Activated CD4-positive, alpha-beta memory T cell treated with anti-CD3 and anti-CD28 coated beads for 36 hours (primary cell): ENCODE measurements at regions of chr1 and their contacts with region 1.

Region 1: GRCh38 chr1:40059338-40059959 is 18.9 kb downstream of the CAP1 start:
- DNase-seq: no peak
- H3K4me3 Mint-ChIP-seq: peak overlapping the region; percentile 30
- H3K27ac Mint-ChIP-seq: peak overlapping the region; percentile 78
- H3K4me1 Mint-ChIP-seq: peaks cover 84% of the 10 kb centered on the region
- H3K27me3 Mint-ChIP-seq: no peaks in the 10 kb centered on the region

Region 2: GRCh38 chr1:40105028-40105427 is 45.6 kb after region 1 on chr1:
- CTCF ChIA-PET with region 1: no interaction called
- POLR2A ChIA-PET with region 1: no interaction called
- intact Hi-C with region 1: loop called (anchors 2 kb)
- DNase-seq: no peak
- H3K4me3 Mint-ChIP-seq: no peak overlapping the region
- H3K27ac Mint-ChIP-seq: no peak overlapping the region
- H3K4me1 Mint-ChIP-seq: peaks cover 6% of the 10 kb centered on the region
- H3K27me3 Mint-ChIP-seq: peaks cover 17% of the 10 kb centered on the region

Region 3: DNA sequence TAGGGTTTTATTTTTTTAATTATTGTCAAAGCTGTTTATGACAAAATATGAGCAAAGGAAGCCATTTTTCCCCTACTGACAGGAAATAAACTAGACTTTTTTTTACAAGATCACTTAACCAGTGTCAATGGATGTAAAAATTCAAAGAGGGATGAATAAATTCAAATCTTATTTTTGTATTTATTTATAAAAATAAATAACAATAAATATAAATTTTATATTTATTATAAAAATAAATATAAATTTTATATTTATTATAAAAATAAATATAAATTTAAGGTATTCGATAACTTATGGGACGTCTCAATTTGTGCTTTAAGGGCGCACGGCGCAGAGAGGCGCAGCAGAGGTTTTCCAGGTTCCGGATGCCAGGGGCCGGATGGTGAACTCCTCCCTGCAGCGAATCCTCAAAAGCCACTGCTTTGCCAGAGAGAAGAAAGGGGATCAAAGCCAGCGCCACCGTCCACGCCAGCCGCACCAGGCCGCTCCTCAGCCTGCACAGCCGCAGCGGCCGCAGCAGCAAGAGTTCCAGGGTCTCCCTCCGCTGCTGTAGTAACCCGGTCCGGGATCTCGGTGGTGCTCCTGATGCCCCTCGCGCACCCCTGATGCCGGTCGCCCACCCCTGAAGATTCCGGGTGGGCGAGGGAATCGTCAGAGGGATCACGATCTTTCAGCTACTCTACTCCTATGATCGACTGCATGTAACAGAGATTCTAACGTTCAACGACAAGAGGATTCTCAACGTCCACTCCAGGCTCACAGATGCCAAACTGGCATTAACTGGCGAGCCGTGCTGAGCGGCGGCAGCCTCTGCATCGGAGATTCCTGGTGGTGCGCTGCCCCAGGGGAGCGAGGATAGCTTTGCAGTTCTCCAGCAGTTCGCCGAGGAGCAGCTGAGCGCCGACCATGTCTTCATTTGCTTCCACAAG is 73.2 kb after region 1 on chr1:
- CTCF ChIA-PET with region 1: no interaction called
- POLR2A ChIA-PET with region 1: no interaction called
- intact Hi-C with region 1: no loop called
- DNase-seq: no peak
- H3K4me3 Mint-ChIP-seq: no peak overlapping the region
- H3K27ac Mint-ChIP-seq: no peak overlapping the region
- H3K4me1 Mint-ChIP-seq: no peaks in the 10 kb centered on the region
- H3K27me3 Mint-ChIP-seq: peaks cover 2% of the 10 kb centered on the region

Region 4: DNA sequence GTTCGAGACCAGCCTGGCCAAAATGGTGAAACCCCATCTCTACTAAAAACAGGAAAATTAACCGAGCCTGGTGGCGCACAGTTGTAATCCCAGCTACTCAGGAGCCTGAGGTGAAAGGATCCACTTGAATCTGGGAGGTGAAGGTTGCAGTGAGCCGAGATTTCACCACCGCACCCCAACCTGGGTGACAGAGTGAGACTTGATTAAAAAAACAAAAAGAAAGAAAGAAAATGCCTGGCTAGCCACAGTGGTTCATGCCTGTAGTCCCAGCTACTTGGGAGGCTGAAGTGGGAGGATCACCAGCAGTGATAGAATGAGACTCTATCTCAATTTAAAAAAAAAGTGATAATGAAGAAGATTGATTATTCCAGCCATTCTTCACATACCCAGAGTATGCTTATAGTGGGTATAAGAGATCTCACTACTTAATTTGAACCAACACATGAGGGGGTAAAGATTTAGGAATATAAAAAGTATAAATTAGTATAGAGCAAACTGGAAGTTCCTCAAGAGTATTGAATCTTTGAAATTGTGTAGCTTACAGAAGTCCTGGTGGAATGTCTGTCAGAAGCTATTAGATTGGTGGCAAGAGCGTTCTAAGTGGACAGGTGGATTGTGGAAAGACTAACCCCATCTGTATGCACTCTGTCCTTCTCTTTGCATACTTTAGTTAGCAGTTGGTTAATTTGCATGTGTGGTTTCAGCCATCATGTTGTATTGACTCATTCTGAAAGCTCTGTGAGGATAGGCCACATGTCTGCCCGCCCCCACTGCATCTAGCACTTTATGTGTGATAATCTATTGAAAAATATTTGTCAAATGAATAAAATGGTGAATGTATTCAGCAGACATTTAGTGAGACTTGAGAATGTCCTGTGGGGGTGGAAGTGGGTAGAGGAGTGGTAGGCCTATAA is 126.8 kb after region 1 on chr1:
- CTCF ChIA-PET with region 1: no interaction called
- POLR2A ChIA-PET with region 1: no interaction called
- intact Hi-C with region 1: no loop called
- DNase-seq: peak; percentile 75
- H3K4me3 Mint-ChIP-seq: peak overlapping the region; percentile 46
- H3K27ac Mint-ChIP-seq: peak overlapping the region; percentile 56
- H3K4me1 Mint-ChIP-seq: peaks cover 45% of the 10 kb centered on the region
- H3K27me3 Mint-ChIP-seq: no peaks in the 10 kb centered on the region